ENCODE measurements at regions of chr19 and their contacts with region 1.

Region 1: DNA sequence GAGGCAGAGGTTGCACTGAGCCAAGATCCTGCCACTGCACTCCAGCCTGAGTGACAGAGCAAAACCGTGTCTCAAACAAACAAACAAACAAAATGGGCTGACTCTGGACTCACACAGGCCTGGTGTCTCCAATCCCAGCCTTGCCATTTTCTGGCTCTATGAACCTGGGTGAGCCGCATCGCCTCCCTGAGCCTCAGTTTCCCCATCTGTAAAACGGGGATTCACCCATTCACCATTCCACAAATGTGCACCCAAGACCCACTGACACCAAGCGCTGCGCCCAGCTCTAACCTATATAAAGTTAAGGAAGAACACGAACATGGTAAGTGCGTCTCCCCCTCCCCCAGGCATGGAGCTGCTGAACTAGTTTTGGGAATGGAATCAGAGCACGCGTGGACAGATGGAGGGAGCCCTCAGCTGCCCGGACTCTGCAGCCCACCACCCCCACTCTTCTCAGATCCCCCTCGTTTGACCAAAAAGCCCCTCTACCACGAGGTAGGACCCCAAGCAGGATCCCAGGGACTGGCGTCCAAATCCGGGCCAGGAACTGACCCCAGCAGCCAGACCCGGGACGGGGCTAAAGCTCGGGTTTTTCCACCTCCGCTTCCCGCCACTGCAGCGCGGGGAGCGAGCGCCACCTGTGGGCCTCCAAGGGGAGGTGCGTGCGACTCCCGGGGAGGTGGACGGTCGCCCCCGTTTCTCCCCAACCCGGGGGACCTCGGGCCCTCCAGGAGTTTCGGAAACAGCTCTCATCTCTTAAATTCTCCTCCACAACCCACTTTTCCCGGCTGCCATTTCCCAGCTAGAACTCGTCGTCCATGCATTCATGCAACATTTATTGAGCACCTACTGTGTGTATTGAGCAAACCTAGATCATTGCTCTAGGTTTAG is 33.0 kb upstream of the ADGRE5 start:
- DNase-seq: peak; percentile 85

Region 2: DNA sequence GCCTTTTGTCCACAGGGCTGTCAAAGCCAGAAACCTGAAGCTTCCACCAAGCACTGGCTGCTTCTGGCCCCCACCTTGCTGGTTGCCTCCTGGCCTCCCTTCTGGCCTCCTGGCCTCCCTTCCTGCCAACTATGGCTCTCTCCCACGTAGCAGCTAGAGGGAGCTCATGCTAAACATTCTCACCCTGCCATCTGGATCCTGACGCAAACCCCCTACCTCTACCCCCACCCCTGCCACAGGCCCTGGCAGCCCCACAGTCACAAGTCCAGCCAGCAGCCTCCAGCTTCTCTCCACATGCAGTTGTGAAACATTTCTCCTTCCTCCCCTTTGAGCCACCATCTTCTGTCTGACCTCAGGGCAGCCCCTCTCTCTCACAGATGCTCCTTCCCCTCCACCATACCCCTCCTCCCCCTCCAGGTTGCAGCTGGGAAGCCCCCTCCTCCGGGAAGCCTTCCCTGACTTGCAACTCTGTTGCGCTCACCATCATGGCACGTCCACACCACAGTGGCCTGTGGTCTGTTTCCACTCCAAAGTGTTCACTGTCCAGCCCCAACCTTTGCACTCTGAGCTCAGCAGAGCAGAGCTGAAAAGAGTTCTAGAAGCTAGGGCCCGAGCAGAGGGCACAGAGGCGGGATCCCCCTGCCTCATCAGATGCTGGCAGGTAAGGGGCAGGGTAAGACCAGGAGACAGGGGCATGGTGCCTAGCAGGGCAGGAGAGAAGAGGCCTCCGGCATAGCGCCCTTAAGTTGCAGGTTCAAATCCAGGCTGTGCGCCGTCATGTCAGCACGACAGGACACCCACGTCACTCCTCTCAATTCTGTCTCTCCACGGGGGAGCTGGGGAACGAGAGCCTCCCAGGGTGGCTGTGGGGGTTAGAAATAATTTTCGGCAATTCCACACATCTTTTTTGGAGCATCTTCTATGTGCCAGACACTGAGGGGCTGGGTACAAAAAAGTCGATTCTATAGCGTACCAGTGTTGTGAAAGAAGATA is 149.6 kb before region 1 on chr19:
- CTCF ChIA-PET with region 1: interaction called, 15 read pairs
- POLR2A ChIA-PET with region 1: no interaction called
- DNase-seq: no peak

Region 3: GRCh38 chr19:14318873-14319272 is 29.4 kb before region 1 on chr19:
- CTCF ChIA-PET with region 1: interaction called, 10 read pairs
- POLR2A ChIA-PET with region 1: no interaction called
- DNase-seq: no peak

Region 4: GRCh38 chr19:14337510-14337909 is 10.7 kb before region 1 on chr19:
- CTCF ChIA-PET with region 1: interaction called, 14 read pairs
- POLR2A ChIA-PET with region 1: no interaction called
- DNase-seq: peak; percentile 83